ENCODE measurements at regions of chr12 and their contacts with region 1.

Region 1: GRCh38 chr12:53746592-53747092 is 5.1 kb downstream of the CISTR start:
- DNase-seq: peak; percentile 86
- H3K27ac ChIP-seq: no peak overlapping the region
- CTCF ChIP-seq: peak; percentile 100

Region 2: DNA sequence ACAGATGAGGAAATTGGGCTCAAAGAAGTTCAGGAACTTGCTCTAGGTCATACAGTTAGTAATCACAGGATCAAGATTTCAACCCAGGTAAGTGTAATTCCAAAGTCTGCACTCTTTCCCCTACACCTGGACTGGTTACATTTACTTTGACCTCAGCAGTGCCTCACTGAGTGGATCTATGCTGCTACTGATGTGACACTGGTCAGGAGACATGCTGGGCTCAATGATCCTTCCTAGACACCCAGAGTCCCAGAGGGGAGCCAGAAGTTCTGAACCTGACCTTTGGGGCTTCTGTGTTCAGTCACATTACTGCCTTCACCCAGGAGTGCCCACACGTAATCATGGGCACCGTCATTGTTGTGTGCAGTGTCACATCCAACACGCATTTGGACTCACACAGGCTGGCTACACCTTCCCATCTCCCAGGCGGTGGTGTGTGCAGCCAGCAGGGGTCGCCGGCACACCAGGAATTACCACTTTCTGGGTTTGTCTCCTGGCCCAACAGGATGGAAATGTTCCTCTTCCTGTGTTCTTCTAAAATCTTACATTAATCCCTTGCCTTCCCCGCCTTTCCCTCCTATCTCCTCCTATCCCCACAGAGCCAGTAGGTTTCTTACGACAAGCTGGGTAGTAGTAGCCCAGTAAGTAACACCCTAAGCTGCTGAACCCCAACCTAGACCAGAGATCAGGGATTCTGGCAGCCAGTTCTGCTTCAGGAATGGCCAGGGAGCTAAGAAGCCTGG is 45.0 kb before region 1 on chr12:
- CTCF ChIA-PET with region 1: interaction called, 68 read pairs
- POLR2A ChIA-PET with region 1: no interaction called
- DNase-seq: peak; percentile 73
- H3K27ac ChIP-seq: no peak overlapping the region
- CTCF ChIP-seq: peak; percentile 87

Region 3: GRCh38 chr12:53727310-53728041 is 19.2 kb before region 1 on chr12 and contains the start of gene CALCOCO1:
- CTCF ChIA-PET with region 1: interaction called, 31 read pairs
- POLR2A ChIA-PET with region 1: no interaction called
- DNase-seq: peak; percentile 98
- H3K27ac ChIP-seq: peak within 1 kb of the TSS; percentile 63
- CTCF ChIP-seq: no peak

Region 4: DNA sequence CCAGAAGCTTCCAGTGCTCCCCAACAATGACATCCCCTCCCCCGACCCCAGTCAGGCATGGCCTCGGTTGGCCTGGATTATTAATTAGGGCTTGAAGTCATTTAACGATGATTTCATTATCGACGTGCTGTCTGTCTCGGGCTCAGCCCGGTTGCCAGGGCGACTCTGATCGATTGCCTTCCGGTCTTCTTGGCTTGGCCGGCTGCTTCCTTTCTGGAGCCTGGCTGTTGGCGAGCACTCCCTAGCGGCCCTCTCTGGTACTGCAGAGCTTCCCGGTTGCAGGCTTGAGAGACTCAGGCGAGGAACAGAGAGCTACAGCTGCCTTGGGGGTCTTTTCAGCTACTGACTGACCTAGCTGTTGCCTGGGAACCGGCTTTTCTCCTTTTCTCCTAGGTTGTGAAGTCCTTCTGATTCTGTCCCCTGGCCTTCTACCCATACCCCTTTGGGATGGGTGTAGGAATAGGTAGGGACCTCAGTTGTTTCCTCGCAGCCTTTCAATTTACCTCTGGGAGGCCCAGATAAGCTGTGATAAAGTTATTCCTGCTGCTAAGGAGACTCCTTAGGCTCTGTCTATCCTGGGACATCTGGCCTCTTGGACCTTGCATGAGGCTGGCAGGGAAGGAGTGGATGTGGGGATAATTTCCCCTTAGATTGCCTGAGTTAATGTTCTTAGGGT is 10.6 kb after region 1 on chr12:
- CTCF ChIA-PET with region 1: interaction called, 18 read pairs
- POLR2A ChIA-PET with region 1: no interaction called
- DNase-seq: no peak
- H3K27ac ChIP-seq: no peak overlapping the region
- CTCF ChIP-seq: peak; percentile 42

Region 5: GRCh38 chr12:54082397-54082892 is 335.8 kb after region 1 on chr12:
- CTCF ChIA-PET with region 1: no interaction called
- POLR2A ChIA-PET with region 1: no interaction called
- DNase-seq: no peak
- H3K27ac ChIP-seq: no peak overlapping the region
- CTCF ChIP-seq: no peak

Measured in RWPE1 (cell line).